ENCODE measurements at regions of chr2 and their contacts with region 1.

Region 1: DNA sequence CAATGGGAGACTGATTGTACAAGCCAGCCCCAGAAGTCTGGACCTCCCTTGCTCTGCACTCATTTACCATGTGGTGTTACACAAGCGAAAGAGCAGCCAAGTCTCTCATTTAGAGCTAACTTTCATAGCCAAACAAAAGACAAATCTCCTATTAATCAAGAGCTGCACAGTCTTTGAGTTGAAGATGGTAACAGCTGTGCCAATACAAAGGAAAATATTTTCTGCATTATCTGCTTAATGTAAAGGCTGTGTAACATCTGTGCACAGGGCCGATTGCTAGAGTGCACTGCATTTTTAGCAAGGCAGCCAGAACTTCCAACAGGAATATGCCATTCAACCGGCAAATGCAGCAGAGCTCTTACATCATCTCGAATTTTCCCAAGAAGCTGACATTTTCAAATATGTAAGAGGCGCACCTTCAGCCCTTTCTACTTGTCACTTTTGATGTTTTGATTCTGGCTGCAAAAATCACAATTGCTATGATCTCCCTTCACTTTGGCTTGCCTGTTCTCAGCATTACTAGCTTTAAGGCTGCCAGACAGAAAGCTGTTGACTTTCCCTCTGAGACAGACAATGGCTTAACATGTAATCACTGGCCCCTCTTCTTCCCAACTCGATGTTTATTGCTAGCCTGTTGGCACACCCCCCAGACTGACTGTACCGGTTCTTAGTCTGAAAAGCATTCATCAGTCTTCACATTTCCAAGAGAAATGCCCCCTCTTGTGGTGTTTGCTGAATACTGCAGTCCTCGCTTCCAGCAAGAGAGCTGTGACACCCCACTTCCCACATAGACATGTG is 96.9 kb upstream of the TANK start:
- DNase-seq: peak; percentile 79
- ATAC-seq: peak; percentile 90
- H3K4me3 Mint-ChIP-seq: no peak overlapping the region
- H3K27ac Mint-ChIP-seq: no peak overlapping the region
- H3K4me1 Mint-ChIP-seq: peaks cover 11% of the 10 kb centered on the region
- H3K27me3 Mint-ChIP-seq: peaks cover 4% of the 10 kb centered on the region

Region 2: DNA sequence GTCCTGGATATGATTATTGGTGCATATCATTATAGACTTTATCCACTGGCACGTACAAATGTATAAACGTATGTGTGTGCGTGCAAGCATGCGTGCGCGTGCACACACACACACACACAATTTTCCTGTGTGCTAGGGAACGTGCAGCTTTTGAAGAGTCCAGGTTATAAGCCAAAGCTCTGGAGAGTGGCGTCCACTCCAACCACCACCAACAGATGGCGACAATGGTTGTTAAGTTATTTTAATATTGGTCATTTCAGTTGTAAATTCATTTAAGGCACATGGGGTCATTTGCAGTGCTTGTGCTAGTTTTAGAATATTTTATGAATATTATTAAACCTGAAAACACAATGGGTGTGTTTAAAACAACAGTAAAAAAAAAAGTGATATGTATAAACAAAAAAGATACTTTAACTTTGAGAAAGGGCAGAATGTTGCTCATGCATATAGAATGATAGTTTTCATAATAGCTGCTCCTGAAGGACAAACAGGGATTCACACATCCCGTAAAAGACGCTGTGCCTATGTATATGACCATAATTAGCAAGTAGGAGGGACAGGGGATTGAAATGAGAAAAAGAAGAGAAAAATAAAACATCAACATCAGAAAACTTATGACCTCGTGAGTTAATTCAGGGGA is 739.1 kb before region 1 on chr2:
- CTCF ChIA-PET with region 1: interaction called, 11 read pairs
- POLR2A ChIA-PET with region 1: no interaction called
- DNase-seq: peak; percentile 58
- ATAC-seq: peak; percentile 22
- H3K4me3 Mint-ChIP-seq: no peak overlapping the region
- H3K27ac Mint-ChIP-seq: no peak overlapping the region
- H3K4me1 Mint-ChIP-seq: peaks cover 58% of the 10 kb centered on the region
- H3K27me3 Mint-ChIP-seq: no peaks in the 10 kb centered on the region

Region 3: DNA sequence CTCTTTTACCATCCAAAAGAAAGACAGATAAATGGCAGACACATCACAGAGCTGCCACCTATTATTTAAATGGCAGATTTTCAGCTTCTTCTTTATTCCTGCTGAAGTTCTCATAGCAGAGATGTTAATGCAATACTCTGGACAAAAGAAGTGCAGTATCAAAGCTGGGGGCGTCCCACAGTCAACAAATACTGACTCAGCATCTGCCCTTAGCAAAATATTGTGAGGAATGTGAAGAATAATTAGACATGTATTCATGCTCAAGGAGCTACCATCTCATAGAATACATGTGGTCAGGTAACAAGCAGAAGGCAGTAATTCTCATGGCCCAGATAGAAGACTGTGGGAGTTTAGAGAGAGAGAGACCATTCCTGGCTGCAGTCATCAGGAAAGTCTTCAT is 11.1 kb before region 1 on chr2:
- CTCF ChIA-PET with region 1: interaction called, 41 read pairs
- POLR2A ChIA-PET with region 1: no interaction called
- DNase-seq: no peak
- ATAC-seq: no peak
- H3K4me3 Mint-ChIP-seq: no peak overlapping the region
- H3K27ac Mint-ChIP-seq: no peak overlapping the region
- H3K4me1 Mint-ChIP-seq: no peaks in the 10 kb centered on the region
- H3K27me3 Mint-ChIP-seq: peaks cover 43% of the 10 kb centered on the region

Region 4: GRCh38 chr2:161096336-161096735 is 33.0 kb after region 1 on chr2:
- CTCF ChIA-PET with region 1: interaction called, 12 read pairs
- POLR2A ChIA-PET with region 1: no interaction called
- DNase-seq: no peak
- ATAC-seq: no peak
- H3K4me3 Mint-ChIP-seq: no peak overlapping the region
- H3K27ac Mint-ChIP-seq: no peak overlapping the region
- H3K4me1 Mint-ChIP-seq: peaks cover 24% of the 10 kb centered on the region
- H3K27me3 Mint-ChIP-seq: no peaks in the 10 kb centered on the region

Region 5: GRCh38 chr2:161136696-161137324 is 73.5 kb after region 1 on chr2:
- CTCF ChIA-PET with region 1: interaction called, 19 read pairs
- POLR2A ChIA-PET with region 1: interaction called, 4 read pairs
- DNase-seq: peak; percentile 31
- ATAC-seq: peak; percentile 78
- H3K4me3 Mint-ChIP-seq: peak overlapping the region; percentile 84
- H3K27ac Mint-ChIP-seq: peak overlapping the region; percentile 84
- H3K4me1 Mint-ChIP-seq: peaks cover 49% of the 10 kb centered on the region
- H3K27me3 Mint-ChIP-seq: no peaks in the 10 kb centered on the region

Region 6: GRCh38 chr2:161273038-161273760 is 209.8 kb after region 1 on chr2:
- CTCF ChIA-PET with region 1: interaction called, 11 read pairs
- POLR2A ChIA-PET with region 1: no interaction called
- DNase-seq: peak; percentile 55
- ATAC-seq: peak; percentile 65
- H3K4me3 Mint-ChIP-seq: no peak overlapping the region
- H3K27ac Mint-ChIP-seq: no peak overlapping the region
- H3K4me1 Mint-ChIP-seq: peaks cover 3% of the 10 kb centered on the region
- H3K27me3 Mint-ChIP-seq: peaks cover 23% of the 10 kb centered on the region